ENCODE measurements at regions of chr3 and their contacts with region 1.

Region 1: GRCh38 chr3:13762906-13763305 is 117.0 kb downstream of the WNT7A start:
- DNase-seq: no peak
- H3K4me3 ChIP-seq: no peak overlapping the region
- H3K27ac ChIP-seq: no peak overlapping the region
- H3K4me1 ChIP-seq: no peaks in the 10 kb centered on the region
- H3K27me3 ChIP-seq: peaks cover 0 to 5% of the 10 kb centered on the region in 2 donors
- CTCF ChIP-seq: no peak
- POLR2A ChIP-seq: no peak

Region 2: DNA sequence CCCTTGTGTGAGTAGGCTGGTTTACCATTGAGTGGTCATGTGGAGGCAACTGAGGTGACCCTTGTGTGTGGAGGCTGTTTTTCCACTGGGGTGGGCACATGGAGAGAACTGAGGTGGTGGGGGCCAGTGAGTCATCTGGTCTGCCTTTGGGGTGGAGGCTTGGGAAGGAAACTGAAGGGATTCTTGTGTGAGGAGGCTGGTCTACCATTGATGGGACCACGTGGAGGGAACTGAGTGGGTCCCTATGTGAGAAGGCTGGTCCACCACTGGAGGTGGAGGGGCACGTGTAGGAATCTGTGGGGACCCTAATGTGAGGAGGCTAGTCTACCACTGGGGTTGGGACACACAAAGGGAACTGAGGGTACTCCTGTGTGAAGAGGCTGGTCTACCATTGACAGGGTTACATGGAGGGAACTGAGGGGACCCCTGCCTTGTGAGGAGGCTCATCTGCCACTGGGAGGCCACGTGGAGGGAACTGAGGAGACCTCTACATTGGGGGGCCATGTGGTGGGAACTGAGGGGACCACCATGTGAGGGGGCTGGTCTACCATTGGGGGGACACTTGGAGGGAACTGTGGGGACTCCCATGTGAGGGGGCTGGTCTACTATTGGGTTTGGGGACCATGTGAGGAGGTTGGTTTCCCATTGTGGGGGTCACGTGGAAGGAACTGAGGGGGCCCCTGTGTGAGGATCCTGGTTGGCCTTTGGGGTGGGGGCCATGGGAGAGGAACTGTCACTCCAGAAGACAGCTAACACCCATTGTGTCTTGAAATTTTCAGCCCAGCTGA is 47.5 kb before region 1 on chr3:
- intact Hi-C with region 1: loop called (anchors 1 kb)
- DNase-seq: peak in 1 of 2 donors; percentile 35
- H3K4me3 ChIP-seq: no peak overlapping the region
- H3K27ac ChIP-seq: no peak overlapping the region
- H3K4me1 ChIP-seq: no peaks in the 10 kb centered on the region
- H3K27me3 ChIP-seq: no peaks in the 10 kb centered on the region
- CTCF ChIP-seq: no peak
- POLR2A ChIP-seq: no peak

Region 3: DNA sequence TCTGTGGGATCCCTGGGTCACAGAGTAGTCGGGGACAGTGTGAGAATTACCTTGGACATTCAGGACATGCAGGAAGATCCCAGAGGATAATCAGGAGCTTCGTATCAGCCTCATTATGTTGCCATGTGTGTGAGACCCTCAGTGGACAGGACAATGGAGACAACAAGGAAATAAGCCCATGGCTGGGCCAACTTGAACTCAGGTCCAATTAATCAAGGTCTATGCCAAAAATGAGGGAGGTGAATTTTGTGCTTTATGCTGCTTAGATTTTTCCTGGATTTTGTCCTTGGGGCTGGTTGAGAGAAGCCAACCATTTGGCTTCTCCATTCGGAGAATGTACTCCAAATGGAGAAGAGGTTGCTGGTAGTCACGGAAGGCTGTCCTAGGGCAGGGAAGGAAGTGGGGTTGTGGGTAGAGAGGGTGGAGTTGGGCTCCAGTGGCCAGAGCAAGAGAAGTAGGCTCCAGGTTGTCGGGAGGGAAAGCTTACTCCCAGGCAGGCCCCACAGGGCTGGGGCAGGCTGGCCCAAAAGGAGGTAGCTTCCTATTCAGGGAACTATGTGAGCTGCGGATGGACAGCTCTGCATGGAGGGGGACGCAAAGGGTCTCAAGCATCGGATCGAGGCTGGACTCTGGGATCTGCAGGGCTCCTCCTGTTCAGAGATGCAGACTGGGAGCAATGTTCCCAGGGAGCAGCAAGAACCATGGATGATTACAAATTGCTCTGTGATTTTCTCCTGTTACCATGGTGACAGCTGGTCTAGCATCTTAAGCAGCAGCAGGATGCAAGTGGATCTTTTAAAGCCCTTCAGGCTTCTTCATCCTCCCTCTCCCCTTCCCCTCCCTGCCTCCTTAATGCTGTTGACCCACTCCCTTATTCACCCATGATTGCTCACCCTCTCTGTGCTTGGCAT is 25.9 kb after region 1 on chr3:
- intact Hi-C with region 1: loop called (anchors 1 kb)
- DNase-seq: no peak
- H3K4me3 ChIP-seq: no peak overlapping the region
- H3K27ac ChIP-seq: no peak overlapping the region
- H3K4me1 ChIP-seq: no peaks in the 10 kb centered on the region
- H3K27me3 ChIP-seq: peaks cover 0 to 39% of the 10 kb centered on the region in 2 donors
- CTCF ChIP-seq: no peak
- POLR2A ChIP-seq: no peak